Aorta (tissue), 5 donors: ENCODE measurements at regions of chr2 and their contacts with region 1.

Region 1: DNA sequence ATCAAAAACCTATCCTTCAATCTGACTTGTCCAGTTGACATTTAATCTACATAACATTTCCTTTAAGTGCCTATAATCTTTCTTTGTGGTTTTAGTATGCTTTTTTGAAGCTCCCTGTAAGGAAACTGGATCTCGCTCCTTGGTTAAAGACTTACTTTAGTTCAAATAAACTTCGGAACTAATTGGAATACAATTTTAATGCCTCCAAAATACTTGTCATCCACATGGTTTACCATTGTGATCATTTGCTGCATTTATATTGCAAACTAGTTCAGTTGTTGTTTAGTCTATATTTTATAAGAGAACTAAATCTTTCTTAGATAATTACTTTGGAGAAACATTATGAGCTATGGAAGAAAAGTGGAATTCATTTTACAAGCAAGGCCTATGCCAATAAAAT is 496.0 kb downstream of the ERBB4 start:
- DNase-seq: no peak
- ATAC-seq: no peak
- H3K4me3 ChIP-seq: no peak overlapping the region
- H3K27ac ChIP-seq: no peak overlapping the region
- H3K4me1 ChIP-seq: no peaks in the 10 kb centered on the region
- H3K27me3 ChIP-seq: no peaks in the 10 kb centered on the region

Region 2: DNA sequence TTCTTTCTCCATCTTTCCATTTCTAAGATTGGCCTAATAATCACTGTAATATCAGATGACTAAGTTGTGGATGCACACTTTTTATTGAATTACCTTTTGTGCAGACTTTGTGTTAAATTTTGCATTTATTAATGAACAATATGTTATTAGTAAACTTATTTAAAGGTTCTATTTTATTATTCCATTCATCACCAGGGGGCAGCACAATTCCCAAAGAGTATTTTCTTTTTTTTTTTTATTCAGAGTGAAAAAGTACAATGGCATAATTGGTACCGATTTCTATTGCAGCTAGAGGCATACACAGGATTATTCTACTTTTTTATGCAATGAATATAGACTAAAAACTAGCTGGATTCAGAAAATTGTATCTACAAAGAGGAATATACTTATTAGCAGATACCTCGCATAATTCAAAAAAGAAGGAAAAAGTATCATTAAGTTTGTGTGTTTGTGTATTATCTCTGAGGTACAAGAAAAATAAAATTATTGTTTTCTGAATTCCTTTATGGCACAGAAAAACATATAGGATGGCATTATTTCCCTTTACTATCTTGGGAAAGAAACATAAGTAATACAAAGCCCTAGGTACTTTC is 105.5 kb after region 1 on chr2:
- intact Hi-C with region 1: loop called in 1 of 2 experiments (anchors 10 kb)
- DNase-seq: no peak
- ATAC-seq: no peak
- H3K4me3 ChIP-seq: no peak overlapping the region
- H3K27ac ChIP-seq: no peak overlapping the region
- H3K4me1 ChIP-seq: peaks cover 1 to 3% of the 10 kb centered on the region in 2 donors
- H3K27me3 ChIP-seq: no peaks in the 10 kb centered on the region